ENCODE measurements at regions of chr2 and their contacts with region 1.

Region 1: GRCh38 chr2:31729764-31730092 is 149.0 kb upstream of the SRD5A2 start:
- DNase-seq: peak; percentile 13 to 42 (median 26)
- ATAC-seq: peak; percentile 96
- H3K4me3 ChIP-seq: no peak overlapping the region
- H3K27ac ChIP-seq: no peak overlapping the region
- H3K4me1 ChIP-seq: no peaks in the 10 kb centered on the region
- H3K27me3 ChIP-seq: no peaks in the 10 kb centered on the region
- CTCF ChIP-seq: peak; percentile 59 to 62 (median 61)
- EP300 ChIP-seq: no peak
- POLR2A ChIP-seq: no peak
- RAD21 ChIP-seq: peak in 1 of 2 experiments; percentile 65; a peak in 2 of 4 replicates

Region 2: DNA sequence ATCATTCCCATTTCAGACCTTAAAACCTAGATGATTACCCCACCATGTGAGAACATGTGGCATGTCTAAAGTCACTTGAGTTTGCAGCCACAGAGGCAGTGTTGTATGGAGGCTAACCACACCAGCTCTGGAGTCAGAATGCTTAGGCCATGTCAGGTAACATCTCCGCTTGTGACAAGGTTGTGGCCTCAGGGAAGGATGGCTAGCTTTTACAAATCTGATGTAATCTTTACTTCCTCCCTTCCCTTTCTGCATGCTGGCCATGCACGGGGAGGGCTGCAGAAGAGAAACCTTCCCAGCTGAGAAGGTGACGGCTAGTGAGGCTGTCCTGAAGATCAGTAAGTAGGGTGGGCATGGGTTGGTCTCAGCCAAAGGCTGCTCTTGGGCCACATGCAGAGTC is 555.5 kb before region 1 on chr2:
- CTCF ChIA-PET with region 1: no interaction called
- POLR2A ChIA-PET with region 1: no interaction called
- in situ Hi-C with region 1: no loop called
- intact Hi-C with region 1: no loop called
- DNase-seq: no peak
- ATAC-seq: no peak
- H3K4me3 ChIP-seq: no peak overlapping the region
- H3K27ac ChIP-seq: no peak overlapping the region
- H3K4me1 ChIP-seq: no peaks in the 10 kb centered on the region
- H3K27me3 ChIP-seq: peaks cover 0 to 3% of the 10 kb centered on the region in 2 experiments; a peak in 1 of 5 replicates
- CTCF ChIP-seq: no peak
- EP300 ChIP-seq: no peak
- POLR2A ChIP-seq: no peak
- RAD21 ChIP-seq: no peak

Region 3: DNA sequence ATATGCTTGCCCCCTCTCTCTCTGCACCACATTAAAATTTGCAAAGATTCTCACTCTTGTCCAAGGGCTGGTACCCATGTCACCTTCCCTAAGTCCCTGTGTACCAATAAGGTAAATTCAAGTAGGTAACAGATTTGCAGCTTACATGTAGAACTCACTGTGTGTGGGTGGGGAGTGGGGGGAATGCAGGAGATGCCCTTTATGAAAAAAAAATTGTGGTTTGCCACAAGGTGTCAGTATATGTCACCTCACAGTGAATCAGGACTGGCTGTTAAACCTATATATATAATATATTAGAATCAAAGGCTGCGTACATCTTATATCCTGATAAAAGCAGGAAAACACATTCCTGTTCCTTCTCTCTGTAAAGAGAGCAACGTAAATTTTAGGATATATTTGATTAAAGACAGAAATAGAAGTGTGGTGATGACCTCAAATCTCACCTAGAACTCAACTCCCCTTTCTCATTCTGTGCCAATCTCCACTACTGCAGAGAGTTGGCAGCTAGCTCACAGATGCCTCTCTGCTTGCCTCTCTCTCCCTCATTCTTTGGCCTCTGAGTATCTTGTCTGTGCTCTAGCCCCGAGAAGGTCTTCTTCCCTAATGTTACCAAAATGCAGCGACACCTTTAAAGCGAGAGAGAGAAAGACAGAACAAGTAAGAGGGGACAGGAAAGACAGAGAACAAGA is 315.7 kb before region 1 on chr2:
- CTCF ChIA-PET with region 1: no interaction called
- POLR2A ChIA-PET with region 1: no interaction called
- in situ Hi-C with region 1: no loop called
- intact Hi-C with region 1: loop called (anchors 10 kb)
- DNase-seq: peak in 1 of 4 experiments; percentile 2
- ATAC-seq: peak; percentile 56; the same call in 1 of the 3 replicates
- H3K4me3 ChIP-seq: no peak overlapping the region
- H3K27ac ChIP-seq: no peak overlapping the region
- H3K4me1 ChIP-seq: no peaks in the 10 kb centered on the region
- H3K27me3 ChIP-seq: no peaks in the 10 kb centered on the region
- CTCF ChIP-seq: peak in 1 of 3 experiments; percentile 31; a peak in 2 of 6 replicates
- EP300 ChIP-seq: no peak
- POLR2A ChIP-seq: no peak
- RAD21 ChIP-seq: no peak

Region 4: GRCh38 chr2:31688282-31688681 is 41.4 kb before region 1 on chr2:
- CTCF ChIA-PET with region 1: no interaction called
- POLR2A ChIA-PET with region 1: no interaction called
- in situ Hi-C with region 1: no loop called
- intact Hi-C with region 1: loop called (anchors 5 kb)
- DNase-seq: peak; percentile 25 to 52 (median 38)
- ATAC-seq: peak; percentile 56; the same call in 1 of the 3 replicates
- H3K4me3 ChIP-seq: no peak overlapping the region
- H3K27ac ChIP-seq: no peak overlapping the region
- H3K4me1 ChIP-seq: no peaks in the 10 kb centered on the region
- H3K27me3 ChIP-seq: no peaks in the 10 kb centered on the region
- CTCF ChIP-seq: peak; percentile 30 to 64 (median 60); a peak in 5 of 6 replicates
- EP300 ChIP-seq: no peak
- POLR2A ChIP-seq: no peak
- RAD21 ChIP-seq: peak; percentile 53 to 70; a peak in 3 of 4 replicates

Measured in K562 (cell line).